ENCODE measurements at regions of chr7 and their contacts with region 1.

Region 1: GRCh38 chr7:7640221-7641128 is at the start of gene UMAD1:
- DNase-seq: peak; percentile 92
- ATAC-seq: peak; percentile 88
- H3K4me3 Mint-ChIP-seq: peak within 1 kb of the TSS; percentile 97
- H3K27ac Mint-ChIP-seq: peak within 1 kb of the TSS; percentile 97
- H3K4me1 Mint-ChIP-seq: peaks cover 38% of the 10 kb centered on the region
- H3K27me3 Mint-ChIP-seq: no peaks in the 10 kb centered on the region
- CTCF ChIP-seq: no peak
- total RNA-seq, gene UMAD1: 13.9 and 15.4 TPM in 2 replicates

Region 2: DNA sequence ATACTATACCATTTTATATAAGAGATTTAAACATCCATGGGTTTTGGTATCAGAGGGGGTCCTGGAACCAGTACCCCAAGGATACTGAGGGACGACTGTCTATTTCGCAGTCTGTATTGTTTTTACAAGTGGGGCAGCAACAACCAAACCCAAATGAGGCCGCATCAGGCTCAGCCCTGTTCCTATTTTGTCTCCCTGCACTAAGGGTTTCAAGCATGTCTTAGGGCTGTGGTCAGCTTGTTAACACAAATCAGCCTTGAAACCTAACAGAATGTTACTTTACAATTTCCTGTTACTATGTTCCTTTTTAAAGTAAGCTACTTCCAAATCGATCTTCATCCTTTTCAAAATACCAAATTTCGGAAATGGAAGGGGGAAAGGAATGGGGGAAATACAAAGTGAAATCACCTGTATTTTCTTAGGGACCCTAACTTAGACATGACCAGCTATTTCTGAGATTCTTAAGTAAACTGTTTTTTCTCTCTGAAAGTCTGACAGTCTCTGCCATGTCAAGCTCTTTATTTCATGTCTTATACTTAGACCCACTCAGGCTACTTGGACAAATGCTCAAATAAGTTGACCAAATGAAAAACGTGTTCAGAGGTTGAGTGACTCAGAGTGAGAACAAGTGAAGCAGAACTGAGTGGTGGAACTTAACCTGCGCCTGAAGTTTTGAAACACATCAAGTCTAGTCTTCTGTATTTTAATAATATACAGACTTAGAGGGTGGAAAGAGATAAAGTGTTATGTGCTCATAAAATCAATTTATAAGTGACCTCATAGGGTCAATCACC is 382.4 kb before region 1 on chr7:
- CTCF ChIA-PET with region 1: no interaction called
- POLR2A ChIA-PET with region 1: interaction called, 4 read pairs
- intact Hi-C with region 1: loop called (anchors 1 kb)
- DNase-seq: no peak
- ATAC-seq: peak; percentile 77
- H3K4me3 Mint-ChIP-seq: peak overlapping the region; percentile 78
- H3K27ac Mint-ChIP-seq: peak overlapping the region; percentile 89
- H3K4me1 Mint-ChIP-seq: peaks cover 66% of the 10 kb centered on the region
- H3K27me3 Mint-ChIP-seq: no peaks in the 10 kb centered on the region
- CTCF ChIP-seq: no peak

Region 3: DNA sequence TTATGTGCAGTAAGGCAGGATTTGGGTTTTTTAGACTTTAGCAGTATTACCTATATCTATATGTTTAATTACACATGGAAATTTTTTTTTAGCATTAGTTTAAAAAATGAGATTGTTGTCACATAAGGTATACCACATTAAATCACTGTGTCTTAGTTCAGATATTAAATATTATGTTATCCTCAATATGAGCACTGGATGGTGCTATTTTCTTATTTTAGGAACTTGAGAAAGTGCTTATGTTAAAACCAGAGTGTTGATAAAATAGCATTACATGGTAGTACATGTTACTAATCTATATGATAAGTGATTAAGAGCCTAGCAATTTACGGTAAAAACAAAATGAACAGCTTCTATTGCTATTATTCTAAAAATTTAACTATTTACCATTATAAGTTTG is 45.0 kb before region 1 on chr7:
- CTCF ChIA-PET with region 1: no interaction called
- POLR2A ChIA-PET with region 1: interaction called, 3 read pairs
- intact Hi-C with region 1: loop called (anchors 1 kb)
- DNase-seq: no peak
- ATAC-seq: peak; percentile 56
- H3K4me3 Mint-ChIP-seq: no peak overlapping the region
- H3K27ac Mint-ChIP-seq: no peak overlapping the region
- H3K4me1 Mint-ChIP-seq: no peaks in the 10 kb centered on the region
- H3K27me3 Mint-ChIP-seq: no peaks in the 10 kb centered on the region
- CTCF ChIP-seq: no peak

Region 4: GRCh38 chr7:7933915-7934526 is 293.5 kb after region 1 on chr7:
- CTCF ChIA-PET with region 1: no interaction called
- POLR2A ChIA-PET with region 1: interaction called, 11 read pairs
- intact Hi-C with region 1: no loop called
- DNase-seq: no peak
- ATAC-seq: no peak
- H3K4me3 Mint-ChIP-seq: no peak overlapping the region
- H3K27ac Mint-ChIP-seq: no peak overlapping the region
- H3K4me1 Mint-ChIP-seq: no peaks in the 10 kb centered on the region
- H3K27me3 Mint-ChIP-seq: no peaks in the 10 kb centered on the region
- CTCF ChIP-seq: no peak

Region 5: DNA sequence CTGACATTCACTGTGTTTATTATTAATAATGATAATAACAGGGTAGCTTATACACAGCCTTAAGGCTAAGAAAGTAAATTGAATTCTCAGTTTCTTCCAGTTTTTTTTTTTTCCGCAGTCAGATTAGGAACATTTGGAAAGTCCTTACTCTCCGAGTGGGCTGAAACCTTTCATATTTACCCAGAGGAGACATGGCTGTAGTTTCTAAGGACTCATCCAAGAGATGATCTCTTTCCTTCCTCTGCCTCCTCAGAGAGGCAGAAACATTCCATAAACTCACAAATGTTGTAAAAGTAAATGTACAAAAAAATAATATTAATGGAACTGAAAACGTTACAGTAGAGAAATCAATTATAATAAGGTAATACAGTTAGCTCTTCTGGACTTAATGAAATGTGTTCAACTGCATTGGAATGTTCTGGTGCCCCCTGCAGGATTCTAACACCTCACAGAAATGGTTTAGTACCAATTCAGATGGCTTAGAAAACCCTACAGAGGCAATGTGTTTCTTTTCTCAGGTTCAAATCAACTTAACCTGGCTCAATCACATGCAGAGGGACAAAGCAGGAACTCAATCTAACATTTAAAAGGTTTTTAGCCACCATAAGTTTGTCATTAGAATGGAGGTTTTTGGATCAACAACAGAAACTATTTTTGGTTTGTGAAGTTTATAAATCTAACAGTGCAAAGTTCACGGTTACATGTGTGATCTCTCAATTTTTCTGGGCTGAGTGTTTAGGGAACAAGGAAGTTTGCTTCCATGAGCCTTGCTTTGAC is 549.8 kb after region 1 on chr7:
- CTCF ChIA-PET with region 1: interaction called, 5 read pairs
- POLR2A ChIA-PET with region 1: interaction called, 6 read pairs
- intact Hi-C with region 1: loop called (anchors 1 kb)
- DNase-seq: no peak
- ATAC-seq: peak; percentile 87
- H3K4me3 Mint-ChIP-seq: no peak overlapping the region
- H3K27ac Mint-ChIP-seq: no peak overlapping the region
- H3K4me1 Mint-ChIP-seq: peaks cover 20% of the 10 kb centered on the region
- H3K27me3 Mint-ChIP-seq: no peaks in the 10 kb centered on the region
- CTCF ChIP-seq: no peak